Right ventricle myocardium inferior (tissue), 1 donor: ENCODE measurements at regions of chr17 and their contacts with region 1.

Region 1: DNA sequence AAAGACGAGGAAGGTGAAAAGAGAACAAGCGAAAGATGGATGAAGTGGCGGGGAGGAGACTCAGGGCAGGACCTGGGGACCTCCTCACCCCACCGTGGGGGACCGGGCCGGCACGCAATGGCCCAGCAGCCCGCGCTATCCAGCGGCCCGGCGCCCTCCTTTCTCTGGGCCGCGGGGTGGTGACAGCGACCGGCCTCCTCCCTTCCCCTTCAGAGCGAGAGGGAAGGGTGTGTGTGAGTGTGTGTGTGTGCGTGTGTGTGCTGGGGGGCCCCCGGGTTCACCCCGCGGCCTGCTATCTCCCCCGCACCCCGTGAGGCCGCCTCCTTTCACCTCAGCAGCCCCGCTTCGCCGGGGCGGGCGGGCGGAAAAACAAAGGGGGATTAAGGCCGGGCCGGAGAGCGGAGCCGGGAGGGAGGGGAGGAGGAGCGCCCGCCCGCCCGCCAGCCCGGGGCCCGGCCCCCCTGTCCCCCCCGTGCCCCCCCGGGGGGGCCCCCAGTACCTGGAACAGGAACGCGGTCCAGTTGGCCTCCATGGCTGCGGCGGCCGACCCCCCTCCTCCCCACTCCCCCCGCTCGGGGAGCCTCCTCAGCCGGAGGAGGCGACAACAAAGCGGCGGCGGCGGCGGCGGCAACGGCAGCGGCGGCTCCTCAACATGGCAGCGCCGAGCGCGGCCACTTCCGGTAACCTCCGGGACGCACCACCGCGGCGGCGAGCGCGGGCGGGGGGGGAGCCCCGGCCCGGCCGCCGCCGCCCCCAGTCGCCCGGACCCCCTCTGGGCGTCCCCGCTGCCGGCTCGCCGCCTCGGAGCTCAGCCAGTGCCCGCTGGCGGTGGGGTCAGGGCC is at the start of gene VEZF1:
- DNase-seq: peak; percentile 94
- ATAC-seq: peak; percentile 71
- total RNA-seq, gene VEZF1: 74.2 TPM

Region 2: DNA sequence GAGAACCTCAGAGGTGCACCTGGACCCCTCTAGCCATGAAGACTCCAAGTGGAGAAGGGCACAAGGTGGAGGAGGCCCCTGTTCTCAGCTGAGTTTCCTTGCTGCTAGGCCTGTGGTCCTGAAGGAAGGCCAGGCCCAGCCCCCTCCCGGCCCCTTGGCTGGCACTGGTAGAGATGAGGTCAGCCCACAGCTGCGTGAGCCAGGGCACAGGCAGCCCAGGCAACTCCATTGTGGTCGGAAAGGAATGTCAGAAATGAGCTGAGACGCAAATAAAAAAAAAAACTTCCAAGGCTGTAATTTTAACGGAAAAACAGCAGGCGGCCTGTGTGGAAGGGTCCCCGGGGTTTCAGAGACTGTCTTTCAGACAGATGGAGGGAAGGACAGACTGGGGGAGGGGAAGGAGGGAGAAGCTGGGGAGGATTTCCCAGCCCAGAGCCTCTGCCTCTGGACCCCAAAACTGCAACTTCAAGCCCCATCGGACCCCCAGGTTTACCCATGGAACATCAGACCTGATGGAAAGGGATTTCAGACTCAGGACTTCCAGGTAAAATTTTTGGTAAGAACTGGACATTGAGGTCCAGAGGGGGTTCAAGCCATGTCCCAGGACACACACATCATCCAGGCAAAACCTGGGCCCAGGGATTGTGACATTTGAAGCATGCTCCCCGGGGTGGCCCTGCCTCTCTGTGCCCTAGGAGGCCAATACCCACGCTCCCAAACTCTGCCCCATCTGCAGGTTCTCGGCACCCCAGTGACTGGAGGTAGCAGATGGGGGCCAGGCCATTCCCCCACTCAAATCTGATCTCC is 112.3 kb before region 1 on chr17:
- intact Hi-C with region 1: loop called (anchors 5 kb)
- DNase-seq: peak; percentile 86
- ATAC-seq: peak; percentile 84

Region 3: DNA sequence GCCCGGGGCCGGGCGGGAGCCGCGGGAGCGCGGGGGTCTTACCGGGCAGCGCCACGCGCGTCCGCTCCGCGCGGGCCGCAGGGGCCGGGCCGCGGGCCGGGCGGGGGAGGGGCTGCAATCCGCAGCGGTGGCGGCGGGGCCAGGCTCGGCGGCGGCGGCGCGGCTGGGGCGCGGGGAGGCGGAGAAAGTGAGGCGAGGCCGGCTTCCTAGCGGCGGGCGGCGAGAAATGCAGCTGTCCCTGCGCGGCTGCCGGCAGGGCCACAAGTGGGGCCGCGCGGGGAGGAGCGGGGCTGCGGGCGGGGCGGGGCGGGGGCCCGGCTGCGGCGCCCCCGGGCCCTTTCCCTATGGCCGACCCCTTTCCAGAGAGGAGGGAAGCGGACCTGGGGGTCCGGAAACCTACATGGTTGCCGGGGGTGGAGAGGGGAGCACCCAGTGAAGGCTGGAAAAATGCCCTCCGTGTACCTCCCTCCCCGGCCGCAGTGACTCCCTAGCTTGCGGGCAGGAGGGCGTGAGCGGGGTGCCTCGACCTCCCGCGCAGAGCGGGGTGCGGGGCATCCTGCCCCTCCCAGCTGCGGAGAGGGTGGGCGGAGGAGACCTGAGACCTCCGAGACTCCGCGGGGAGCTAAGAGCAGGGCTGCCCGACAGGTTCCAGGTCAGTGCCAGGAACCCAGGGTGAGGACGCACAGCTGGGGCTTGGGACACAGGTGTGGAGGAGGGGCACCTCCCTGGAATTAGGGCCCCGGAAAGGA is 32.4 kb before region 1 on chr17 and contains the start of gene CUEDC1:
- intact Hi-C with region 1: loop called (anchors 2 kb)
- DNase-seq: peak; percentile 94
- ATAC-seq: peak; percentile 75
- total RNA-seq, gene CUEDC1: 49.1 TPM